ENCODE measurements at regions of chr7 and their contacts with region 1.

Region 1: GRCh38 chr7:44581879-44582603 is at the start of gene TMED4:
- DNase-seq: peak; percentile 100
- H3K4me3 ChIP-seq: peak within 1 kb of the TSS; percentile 84 to 98
- H3K27ac ChIP-seq: peak within 1 kb of the TSS; percentile 98 to 99
- H3K4me1 ChIP-seq: peaks cover 6% of the 10 kb centered on the region
- H3K27me3 ChIP-seq: no peaks in the 10 kb centered on the region
- CTCF ChIP-seq: peak in 1 of 3 experiments; percentile 9
- POLR2A ChIP-seq: peak; percentile 50
- total RNA-seq, gene TMED4: 164 to 236 TPM

Region 2: DNA sequence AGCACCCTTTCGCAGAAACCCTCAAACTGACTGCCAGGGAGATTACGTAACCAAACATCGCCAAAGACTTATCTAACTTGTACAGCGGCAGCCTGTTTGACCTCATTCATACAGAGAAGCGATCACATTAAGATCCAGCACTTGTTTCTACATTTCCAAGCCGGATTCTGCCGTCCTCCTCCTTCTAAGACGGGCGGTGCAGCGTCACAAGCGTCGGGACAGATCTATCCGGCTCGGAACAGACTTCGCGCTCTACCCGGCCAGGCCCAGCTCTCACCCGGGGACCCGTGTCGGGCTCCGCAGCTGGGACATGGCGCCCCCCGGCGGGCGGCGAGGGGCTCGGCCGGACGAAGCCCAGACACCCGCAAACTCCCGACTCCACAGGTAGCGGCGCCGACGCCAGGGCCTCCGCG is 265.5 kb after region 1 on chr7:
- intact Hi-C with region 1: loop called (anchors 5 kb)
- DNase-seq: peak; percentile 91
- H3K4me3 ChIP-seq: peak overlapping the region; percentile 59 to 84
- H3K27ac ChIP-seq: peak overlapping the region; percentile 54 to 98
- H3K4me1 ChIP-seq: no peaks in the 10 kb centered on the region
- H3K27me3 ChIP-seq: no peaks in the 10 kb centered on the region
- CTCF ChIP-seq: peak; percentile 87 to 90 (median 87)
- POLR2A ChIP-seq: no peak